Activated CD4-positive, alpha-beta memory T cell treated with anti-CD3 and anti-CD28 coated beads for 36 hours (primary cell): ENCODE measurements at regions of chr11 and their contacts with region 1.

Region 1: GRCh38 chr11:117072517-117073461 is 25.4 kb downstream of the SIK3 start:
- DNase-seq: no peak
- H3K4me3 Mint-ChIP-seq: peak overlapping the region; percentile 2
- H3K27ac Mint-ChIP-seq: no peak overlapping the region
- H3K4me1 Mint-ChIP-seq: peaks cover 70% of the 10 kb centered on the region
- H3K27me3 Mint-ChIP-seq: no peaks in the 10 kb centered on the region

Region 2: GRCh38 chr11:117010808-117011540 is 61.8 kb before region 1 on chr11:
- CTCF ChIA-PET with region 1: no interaction called
- POLR2A ChIA-PET with region 1: interaction called, 5 read pairs
- intact Hi-C with region 1: loop called (anchors 1 kb)
- DNase-seq: no peak
- H3K4me3 Mint-ChIP-seq: no peak overlapping the region
- H3K27ac Mint-ChIP-seq: peak overlapping the region; percentile 84
- H3K4me1 Mint-ChIP-seq: peaks cover 51% of the 10 kb centered on the region
- H3K27me3 Mint-ChIP-seq: no peaks in the 10 kb centered on the region

Region 3: DNA sequence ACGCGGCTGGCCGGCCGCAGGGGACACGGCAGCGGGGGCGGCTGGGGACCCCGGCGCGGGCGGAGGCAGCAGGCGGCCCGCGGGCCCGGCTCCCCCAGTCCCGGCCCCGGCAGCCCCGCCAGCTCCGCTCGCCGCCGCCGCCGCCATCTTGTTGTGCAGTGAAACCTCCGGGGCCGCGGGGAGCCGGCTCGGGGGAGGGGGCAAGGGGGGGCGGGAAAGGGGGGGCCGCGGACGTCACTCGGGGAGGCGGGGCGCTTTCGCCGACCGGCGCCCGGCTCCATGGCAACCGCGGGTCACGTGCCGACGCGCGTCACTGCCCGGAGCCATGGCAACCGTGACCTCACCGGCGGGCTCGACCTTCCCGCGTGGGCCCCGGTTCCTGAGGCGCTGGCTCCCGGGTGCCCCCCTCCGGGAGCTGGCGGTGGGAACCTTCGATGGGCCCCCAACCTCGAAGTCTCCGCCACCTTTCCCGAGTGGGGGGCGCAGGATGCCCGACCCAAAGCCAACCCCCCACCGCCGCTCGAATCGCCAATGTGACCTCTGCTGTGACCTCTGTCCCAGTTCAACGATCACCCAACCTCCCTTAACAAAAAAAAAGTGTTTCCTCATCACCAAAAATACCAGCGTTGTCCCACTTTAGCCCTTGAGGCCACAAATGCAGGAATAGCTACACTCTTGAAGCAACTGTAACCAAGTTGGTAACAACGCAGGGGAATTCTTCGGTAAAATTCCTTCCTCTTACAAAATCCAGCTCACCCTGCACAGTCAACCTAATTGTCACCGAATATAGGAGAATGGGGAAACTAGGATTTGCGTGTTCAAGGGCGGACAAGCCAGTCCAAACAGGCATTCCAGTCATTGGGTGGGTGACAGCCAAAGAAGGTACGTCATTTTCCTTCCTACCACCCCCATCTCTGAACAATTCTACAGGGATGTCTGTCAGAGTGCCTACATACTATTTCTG is 25.8 kb after region 1 on chr11 and contains the start of gene SIK3:
- CTCF ChIA-PET with region 1: interaction called, 6 read pairs
- POLR2A ChIA-PET with region 1: interaction called, 14 read pairs
- intact Hi-C with region 1: loop called (anchors 1 kb)
- DNase-seq: peak; percentile 94
- H3K4me3 Mint-ChIP-seq: peak within 1 kb of the TSS; percentile 88
- H3K27ac Mint-ChIP-seq: peak within 1 kb of the TSS; percentile 91
- H3K4me1 Mint-ChIP-seq: peaks cover 43% of the 10 kb centered on the region
- H3K27me3 Mint-ChIP-seq: no peaks in the 10 kb centered on the region
- total RNA-seq, gene SIK3: 26.1 to 26.2 TPM

Region 4: DNA sequence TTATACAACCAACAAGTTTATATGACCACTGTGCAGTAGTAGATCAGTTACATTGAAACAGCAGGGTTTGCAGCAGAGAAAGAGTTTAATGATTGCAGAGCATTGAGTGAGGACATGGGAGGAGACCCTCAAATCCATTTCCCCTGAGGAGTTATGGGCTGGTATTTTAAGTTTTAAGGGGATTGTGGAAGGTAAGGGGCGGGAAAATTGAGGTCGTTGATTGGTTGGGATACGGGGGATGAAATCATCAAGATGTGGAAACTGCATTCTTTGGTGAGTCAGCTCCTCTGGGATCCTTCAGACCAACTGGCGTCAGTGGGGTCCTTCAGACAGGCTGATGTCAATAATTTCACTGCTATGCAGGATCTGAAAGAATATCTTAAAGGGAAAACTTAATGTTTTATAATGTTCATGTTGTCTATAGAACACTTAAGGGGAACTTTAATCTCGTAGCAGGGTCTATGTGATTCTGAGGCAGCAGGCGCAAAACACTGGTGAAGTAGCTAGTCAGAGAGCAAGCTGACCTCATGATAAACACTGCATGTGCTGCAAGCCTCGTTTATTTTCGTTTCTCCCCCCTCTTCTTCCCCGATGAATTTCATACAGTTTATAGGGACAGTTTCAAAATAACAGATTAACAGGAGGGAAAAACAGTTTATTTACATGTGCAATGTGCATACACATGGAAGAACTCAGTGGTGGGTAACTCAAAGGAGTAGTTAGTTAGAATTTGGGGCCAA is 200.9 kb after region 1 on chr11:
- CTCF ChIA-PET with region 1: no interaction called
- POLR2A ChIA-PET with region 1: no interaction called
- intact Hi-C with region 1: no loop called
- DNase-seq: no peak
- H3K4me3 Mint-ChIP-seq: no peak overlapping the region
- H3K27ac Mint-ChIP-seq: no peak overlapping the region
- H3K4me1 Mint-ChIP-seq: peaks cover 24% of the 10 kb centered on the region
- H3K27me3 Mint-ChIP-seq: no peaks in the 10 kb centered on the region